HCT116 (cell line): ENCODE measurements at regions of chr6 and their contacts with region 1.

Region 1: GRCh38 chr6:158220786-158221442 is 52.8 kb downstream of the GTF2H5 start:
- DNase-seq: peak; percentile 73
- ATAC-seq: peak; percentile 100
- H3K4me3 ChIP-seq: no peak overlapping the region
- H3K27ac ChIP-seq: no peak overlapping the region
- H3K4me1 ChIP-seq: no peaks in the 10 kb centered on the region
- H3K27me3 ChIP-seq: no peaks in the 10 kb centered on the region
- CTCF ChIP-seq: peak; percentile 89 to 97 (median 90)
- POLR2A ChIP-seq: no peak
- RAD21 ChIP-seq: peak; percentile 94

Region 2: DNA sequence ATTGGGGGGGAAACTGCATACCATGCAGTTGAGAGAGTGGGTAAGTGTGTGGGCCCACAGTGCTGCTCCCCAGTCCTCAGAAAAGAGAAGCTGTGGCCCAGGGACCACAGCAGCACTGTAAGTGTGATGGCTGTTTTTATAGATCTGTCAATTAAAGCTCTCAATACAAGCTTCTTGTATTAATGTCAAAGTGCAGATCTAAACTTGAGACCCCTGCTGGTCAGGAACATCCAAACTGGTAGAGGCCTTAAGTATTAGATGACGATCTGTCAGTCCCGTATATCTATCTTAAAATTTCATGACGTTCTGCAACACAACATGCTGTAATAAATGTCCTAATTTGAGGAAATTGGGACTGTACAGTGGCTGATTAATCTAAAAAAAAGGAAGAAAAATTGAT is 166.1 kb after region 1 on chr6:
- CTCF ChIA-PET with region 1: interaction called, 7 read pairs
- POLR2A ChIA-PET with region 1: no interaction called
- RAD21 ChIA-PET with region 1: no interaction called
- intact Hi-C with region 1: loop called (anchors 5 kb)
- DNase-seq: peak; percentile 4
- ATAC-seq: peak; percentile 67
- H3K4me3 ChIP-seq: no peak overlapping the region
- H3K27ac ChIP-seq: no peak overlapping the region
- H3K4me1 ChIP-seq: no peaks in the 10 kb centered on the region
- H3K27me3 ChIP-seq: no peaks in the 10 kb centered on the region
- CTCF ChIP-seq: peak in 2 of 3 experiments; percentile 30 to 39; a peak in 3 of 6 replicates
- POLR2A ChIP-seq: no peak
- RAD21 ChIP-seq: no peak

Region 3: DNA sequence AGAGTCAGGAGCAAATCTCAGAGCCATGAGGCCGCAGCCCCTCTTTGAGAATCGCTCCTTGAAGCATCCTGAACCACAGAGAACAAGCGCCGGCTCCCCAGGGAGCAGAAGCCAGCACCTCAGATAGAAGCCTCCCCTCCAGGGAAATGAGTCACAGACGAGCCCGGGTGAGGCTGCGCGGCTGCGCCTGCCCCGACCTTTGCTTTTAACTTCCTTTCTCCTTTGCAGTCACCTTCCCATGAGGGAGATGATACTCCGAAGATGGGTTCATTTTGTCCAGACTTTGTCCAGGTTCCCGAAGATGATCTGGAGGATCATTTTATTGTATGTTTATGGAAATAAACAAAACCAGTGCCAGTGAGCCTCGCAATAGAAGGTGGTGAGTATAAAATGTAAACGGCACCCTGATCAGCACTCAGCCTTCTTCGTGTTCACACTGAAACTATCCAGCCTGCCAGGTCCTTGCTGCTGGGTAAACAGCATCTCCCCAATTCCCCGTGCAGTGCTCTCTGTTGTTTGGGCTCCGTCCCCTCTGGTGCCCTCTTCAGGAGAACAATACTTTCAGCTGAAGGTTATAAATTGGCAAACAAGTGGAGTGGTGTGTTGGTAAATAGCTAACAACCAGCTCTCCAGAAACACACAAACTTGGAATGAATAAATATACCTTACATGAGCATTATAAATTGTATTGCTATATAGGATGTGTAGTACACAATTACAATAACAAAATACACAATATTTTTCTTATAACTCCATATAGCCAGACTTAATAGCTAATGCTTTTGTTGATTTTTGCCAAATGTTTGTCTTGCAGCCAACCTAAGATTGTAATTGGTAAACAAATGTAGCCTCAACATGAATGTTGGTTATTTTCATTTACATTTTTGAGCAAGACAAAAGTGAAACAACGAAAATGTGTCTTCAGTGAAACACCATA is 297.5 kb after region 1 on chr6:
- CTCF ChIA-PET with region 1: interaction called, 15 read pairs
- POLR2A ChIA-PET with region 1: no interaction called
- RAD21 ChIA-PET with region 1: no interaction called
- intact Hi-C with region 1: loop called (anchors 1 kb)
- DNase-seq: peak; percentile 77
- ATAC-seq: peak; percentile 94
- H3K4me3 ChIP-seq: peak overlapping the region; percentile 40 to 53
- H3K27ac ChIP-seq: 0 out of 2 replicates have a peak overlapping the region, but pooled peaks have one; percentile 15
- H3K4me1 ChIP-seq: peaks cover 6 to 18% of the 10 kb centered on the region in 2 experiments; a peak in 3 of 4 replicates
- H3K27me3 ChIP-seq: no peaks in the 10 kb centered on the region
- CTCF ChIP-seq: peak; percentile 67 to 79 (median 68); a peak in 5 of 6 replicates
- POLR2A ChIP-seq: no peak
- RAD21 ChIP-seq: peak; percentile 74

Region 4: DNA sequence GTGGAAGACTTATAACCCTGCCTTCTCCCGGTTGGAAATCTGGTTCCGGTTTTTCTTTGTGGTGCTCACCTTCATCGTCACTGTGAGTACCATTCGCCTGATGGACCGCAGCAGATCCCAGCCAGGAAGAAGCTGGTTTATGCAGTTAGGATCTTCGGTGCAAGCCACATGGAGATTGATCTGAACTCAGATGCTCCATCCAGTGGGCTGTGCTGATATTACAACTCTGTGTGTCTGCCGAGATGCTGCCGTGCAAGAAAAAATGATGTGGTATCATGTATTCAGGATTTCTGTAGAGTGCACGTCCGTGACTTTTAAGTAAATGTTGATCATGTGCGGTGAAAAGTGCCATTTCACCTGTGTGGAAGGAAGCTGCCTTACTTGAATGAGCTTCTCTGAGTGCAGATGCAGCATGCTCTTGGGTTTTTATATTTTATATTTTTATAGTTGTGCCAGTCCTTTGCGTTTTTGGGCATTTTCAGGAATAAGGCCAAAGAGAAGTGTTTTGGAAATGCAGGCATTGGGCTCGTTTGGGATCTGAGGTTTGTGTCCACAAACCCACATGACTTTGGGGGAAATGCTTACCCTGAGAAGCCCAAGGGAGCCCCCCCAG is 384.5 kb after region 1 on chr6:
- CTCF ChIA-PET with region 1: interaction called, 38 read pairs
- POLR2A ChIA-PET with region 1: no interaction called
- RAD21 ChIA-PET with region 1: interaction called in 1 of 2 experiments, 6 read pairs
- intact Hi-C with region 1: loop called (anchors 2 kb)
- DNase-seq: peak; percentile 48
- ATAC-seq: peak; percentile 91
- H3K4me3 ChIP-seq: no peak overlapping the region
- H3K27ac ChIP-seq: no peak overlapping the region
- H3K4me1 ChIP-seq: no peaks in the 10 kb centered on the region
- H3K27me3 ChIP-seq: no peaks in the 10 kb centered on the region
- CTCF ChIP-seq: peak; percentile 62 to 66 (median 65); a peak in 5 of 6 replicates
- POLR2A ChIP-seq: no peak
- RAD21 ChIP-seq: peak; percentile 74

Region 5: DNA sequence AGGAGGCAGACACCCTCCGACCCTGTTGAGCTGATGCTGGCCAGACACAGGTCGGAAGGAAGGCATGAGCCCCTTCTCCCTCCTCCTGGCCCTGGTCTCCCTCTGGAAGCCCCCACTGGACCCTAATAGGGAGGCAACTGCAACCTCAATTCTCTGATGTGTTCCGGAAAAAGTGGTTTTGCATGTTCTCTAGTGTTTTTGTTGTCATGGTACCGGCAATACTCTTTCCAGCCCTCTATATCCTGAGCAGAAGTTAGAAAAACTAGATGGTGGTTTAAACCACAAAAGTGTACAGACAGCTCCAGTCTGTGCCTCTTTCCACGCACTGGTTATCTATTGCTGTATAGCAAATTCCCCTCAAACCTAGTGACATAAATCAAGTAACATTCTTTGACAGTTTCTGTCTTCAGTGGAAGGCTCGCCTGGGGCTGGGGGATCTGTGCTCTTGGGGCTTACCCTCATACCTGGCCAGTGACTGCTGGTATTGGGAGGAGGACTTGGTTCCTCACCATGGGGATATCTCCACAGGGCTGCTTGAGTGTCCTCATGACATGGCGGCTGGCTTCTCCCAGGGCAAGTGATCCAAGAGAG is 466.0 kb after region 1 on chr6:
- CTCF ChIA-PET with region 1: interaction called, 30 read pairs
- POLR2A ChIA-PET with region 1: no interaction called
- RAD21 ChIA-PET with region 1: no interaction called
- intact Hi-C with region 1: no loop called
- DNase-seq: no peak
- ATAC-seq: peak; percentile 50
- H3K4me3 ChIP-seq: no peak overlapping the region
- H3K27ac ChIP-seq: peak overlapping the region; percentile 67
- H3K4me1 ChIP-seq: peaks cover 16 to 24% of the 10 kb centered on the region in 2 experiments
- H3K27me3 ChIP-seq: no peaks in the 10 kb centered on the region
- CTCF ChIP-seq: no peak
- POLR2A ChIP-seq: no peak
- RAD21 ChIP-seq: no peak

Region 6: GRCh38 chr6:158972241-158973233 is 751.6 kb after region 1 on chr6:
- CTCF ChIA-PET with region 1: no interaction called
- POLR2A ChIA-PET with region 1: no interaction called
- RAD21 ChIA-PET with region 1: no interaction called
- intact Hi-C with region 1: loop called (anchors 10 kb)
- DNase-seq: peak; percentile 55
- ATAC-seq: peak; percentile 72
- H3K4me3 ChIP-seq: no peak overlapping the region
- H3K27ac ChIP-seq: peak overlapping the region; percentile 6; the same call in 1 of the 2 replicates
- H3K4me1 ChIP-seq: peaks cover 0 to 20% of the 10 kb centered on the region in 2 experiments; a peak in 2 of 4 replicates
- H3K27me3 ChIP-seq: no peaks in the 10 kb centered on the region
- CTCF ChIP-seq: peak; percentile 31 to 70 (median 59); a peak in 5 of 6 replicates
- POLR2A ChIP-seq: no peak
- RAD21 ChIP-seq: peak; percentile 93